ENCODE measurements at regions of chr20 and their contacts with region 1.

Region 1: GRCh38 chr20:44217342-44218092 is 6.9 kb upstream of the OSER1 start:
- DNase-seq: peak; percentile 41 to 80 (median 68)
- ATAC-seq: peak; percentile 68
- H3K4me3 ChIP-seq: peak overlapping the region; percentile 57
- H3K4me3 Mint-ChIP-seq: peak overlapping the region; percentile 76 to 90 (median 86)
- H3K27ac ChIP-seq: peak overlapping the region; percentile 75
- H3K27ac Mint-ChIP-seq: peak overlapping the region; percentile 81 to 99 (median 94)
- H3K4me1 ChIP-seq: peaks cover 29 to 33% of the 10 kb centered on the region in 2 donors
- H3K4me1 Mint-ChIP-seq: peaks cover 40 to 85% (median 72%) of the 10 kb centered on the region in 7 donors
- H3K27me3 ChIP-seq: no peaks in the 10 kb centered on the region
- H3K27me3 Mint-ChIP-seq: no peaks in the 10 kb centered on the region

Region 2: DNA sequence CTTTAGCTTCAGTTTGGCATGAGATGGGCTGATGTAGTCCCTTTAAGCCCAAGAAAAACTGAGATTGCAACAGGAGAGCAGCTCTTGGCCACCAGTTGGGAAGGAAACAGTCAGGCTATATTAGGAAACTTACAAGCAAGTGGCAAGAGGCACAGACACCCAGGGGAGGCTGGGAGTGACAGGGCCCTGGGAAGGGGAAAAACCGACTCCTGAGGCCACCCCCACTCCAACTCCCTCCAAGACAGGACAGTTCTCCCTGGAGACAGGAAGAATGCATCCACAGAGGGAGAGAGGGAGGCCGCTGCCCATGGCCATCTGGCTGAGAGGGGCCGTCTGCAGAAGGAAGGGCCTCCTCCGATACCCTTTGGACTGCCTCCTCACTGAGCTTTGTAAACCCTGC is 51.0 kb before region 1 on chr20:
- CTCF ChIA-PET with region 1: no interaction called
- POLR2A ChIA-PET with region 1: no interaction called
- intact Hi-C with region 1: no loop called
- DNase-seq: no peak
- ATAC-seq: no peak
- H3K4me3 ChIP-seq: no peak overlapping the region
- H3K4me3 Mint-ChIP-seq: no peak overlapping the region
- H3K27ac ChIP-seq: no peak overlapping the region
- H3K27ac Mint-ChIP-seq: no peak overlapping the region
- H3K4me1 ChIP-seq: no peaks in the 10 kb centered on the region
- H3K4me1 Mint-ChIP-seq: peaks cover 0 to 2% (median 0%) of the 10 kb centered on the region in 7 donors
- H3K27me3 ChIP-seq: no peaks in the 10 kb centered on the region
- H3K27me3 Mint-ChIP-seq: peaks cover 26 to 59% (median 48%) of the 10 kb centered on the region in 5 donors

Region 3: DNA sequence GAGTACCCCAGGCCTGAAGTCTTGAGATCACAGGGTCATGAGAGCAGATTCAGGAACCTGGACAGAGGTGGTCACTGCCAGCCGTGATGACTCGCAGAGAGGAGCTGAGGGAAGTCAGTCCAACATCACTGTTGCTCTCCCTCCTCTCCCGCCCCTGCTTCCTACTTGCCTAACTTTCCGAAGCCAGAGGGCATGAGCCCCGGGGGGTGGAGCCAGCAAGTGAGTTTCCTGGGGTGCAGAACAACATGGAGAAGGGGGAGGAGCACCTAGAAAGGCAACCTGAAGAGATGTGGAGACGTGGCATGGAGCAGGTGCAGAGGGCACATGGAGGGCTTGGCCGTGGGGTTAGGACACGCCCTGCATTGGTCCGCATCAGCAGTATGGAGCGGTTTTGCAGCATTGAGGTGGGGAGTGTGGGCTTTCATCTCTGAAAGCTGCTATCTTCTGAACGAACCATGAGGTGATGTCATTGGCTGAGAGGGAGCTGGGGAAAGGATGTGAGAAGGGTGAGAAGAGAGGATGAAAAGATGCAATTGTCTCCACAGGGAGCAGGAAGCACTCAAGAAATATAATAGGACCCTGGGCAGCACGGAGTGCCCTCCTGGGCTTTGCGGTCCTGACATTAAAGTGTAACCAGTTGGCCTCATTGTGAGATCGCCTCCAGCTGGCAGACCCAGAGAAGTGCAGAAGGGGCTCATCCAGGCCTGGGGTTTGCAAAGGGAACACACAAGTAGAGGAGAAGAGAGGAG is 54.6 kb after region 1 on chr20:
- CTCF ChIA-PET with region 1: interaction called, 27 read pairs
- POLR2A ChIA-PET with region 1: interaction called, 6 read pairs
- intact Hi-C with region 1: loop called (anchors 1 to 5 kb)
- DNase-seq: peak in 3 of 9 donors; percentile 7 to 41 (median 8)
- ATAC-seq: peak; percentile 48
- H3K4me3 ChIP-seq: no peak overlapping the region
- H3K4me3 Mint-ChIP-seq: no peak overlapping the region
- H3K27ac ChIP-seq: no peak overlapping the region
- H3K27ac Mint-ChIP-seq: no peak overlapping the region
- H3K4me1 ChIP-seq: no peaks in the 10 kb centered on the region
- H3K4me1 Mint-ChIP-seq: peaks cover 0 to 2% (median 0%) of the 10 kb centered on the region in 7 donors
- H3K27me3 ChIP-seq: no peaks in the 10 kb centered on the region
- H3K27me3 Mint-ChIP-seq: no peaks in the 10 kb centered on the region

Region 4: DNA sequence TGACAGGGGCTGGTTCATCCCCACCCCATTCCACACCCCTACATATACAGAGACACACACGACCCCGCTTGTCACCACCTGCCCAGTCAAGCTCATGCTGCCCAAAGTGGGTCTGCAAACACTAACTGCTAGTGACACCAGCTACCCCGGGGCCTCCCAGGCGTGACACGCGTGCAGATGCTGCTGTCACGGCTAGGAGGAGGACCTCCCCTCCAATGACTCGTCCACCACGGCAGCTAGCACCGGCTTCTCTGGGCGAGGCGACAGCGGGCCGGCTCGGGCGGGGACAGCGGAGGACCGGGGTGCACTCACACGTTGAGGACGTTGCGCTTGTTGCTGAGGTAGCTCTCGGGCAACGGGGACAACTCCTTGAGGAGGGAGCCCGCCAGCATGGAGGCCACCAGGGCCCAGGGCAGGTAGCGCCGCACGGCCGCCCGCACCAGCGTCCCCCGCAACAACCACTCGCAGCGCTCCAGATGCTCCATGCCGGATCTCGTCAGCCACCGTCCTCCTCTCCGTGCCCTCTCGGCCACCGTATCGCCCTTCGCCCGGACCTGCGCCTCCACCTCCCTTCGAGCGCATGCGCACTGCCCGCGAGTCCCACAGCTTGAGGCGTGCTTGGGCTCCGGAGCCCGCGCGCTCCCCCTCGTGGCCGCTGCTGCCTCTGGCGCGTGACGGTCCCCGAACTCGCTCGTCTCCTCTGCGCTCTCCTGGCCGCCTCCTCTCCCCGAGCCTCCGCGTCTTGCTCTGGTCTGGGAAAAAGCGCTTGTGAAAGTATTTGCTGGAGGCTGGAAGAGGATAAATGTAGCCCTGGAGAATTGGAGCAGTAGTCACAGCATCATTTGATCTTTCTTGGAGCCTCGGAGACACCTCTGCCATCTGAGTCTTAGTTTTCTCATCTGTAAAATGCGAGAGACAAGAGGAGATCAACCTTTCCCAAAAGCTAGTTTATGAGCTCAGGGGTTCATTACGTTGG is 93.4 kb after region 1 on chr20 and contains the start of gene FITM2:
- CTCF ChIA-PET with region 1: interaction called, 365 read pairs
- POLR2A ChIA-PET with region 1: interaction called, 165 read pairs
- intact Hi-C with region 1: loop called (anchors 1 kb)
- DNase-seq: peak; percentile 96 to 99 (median 98)
- ATAC-seq: peak; percentile 99
- H3K4me3 ChIP-seq: peak within 1 kb of the TSS; percentile 98
- H3K4me3 Mint-ChIP-seq: peak within 1 kb of the TSS; percentile 87 to 97 (median 95)
- H3K27ac ChIP-seq: peak within 1 kb of the TSS; percentile 82
- H3K27ac Mint-ChIP-seq: peak within 1 kb of the TSS; percentile 91 to 98 (median 93)
- H3K4me1 ChIP-seq: peaks cover 12 to 18% of the 10 kb centered on the region in 2 donors
- H3K4me1 Mint-ChIP-seq: peaks cover 15 to 35% (median 28%) of the 10 kb centered on the region in 7 donors
- H3K27me3 ChIP-seq: no peaks in the 10 kb centered on the region
- H3K27me3 Mint-ChIP-seq: peaks cover 0 to 8% (median 0%) of the 10 kb centered on the region in 5 donors
- total RNA-seq, gene FITM2: 3.1 to 7.9 (median 5.0) TPM

Region 5: GRCh38 chr20:44388466-44389023 is 171.0 kb after region 1 on chr20:
- CTCF ChIA-PET with region 1: interaction called, 64 read pairs
- POLR2A ChIA-PET with region 1: no interaction called
- intact Hi-C with region 1: loop called (anchors 1 kb)
- DNase-seq: peak; percentile 30 to 70 (median 50)
- ATAC-seq: peak; percentile 91
- H3K4me3 ChIP-seq: no peak overlapping the region
- H3K4me3 Mint-ChIP-seq: peak overlapping the region in 4 of 10 donors; percentile 14 to 69 (median 38)
- H3K27ac ChIP-seq: no peak overlapping the region
- H3K27ac Mint-ChIP-seq: peak overlapping the region in 1 of 9 donors; percentile 41
- H3K4me1 ChIP-seq: no peaks in the 10 kb centered on the region
- H3K4me1 Mint-ChIP-seq: peaks cover 4 to 16% (median 8%) of the 10 kb centered on the region in 7 donors
- H3K27me3 ChIP-seq: no peaks in the 10 kb centered on the region
- H3K27me3 Mint-ChIP-seq: peaks cover 9 to 20% (median 10%) of the 10 kb centered on the region in 5 donors

Region 6: GRCh38 chr20:44475694-44476560 is 258.4 kb after region 1 on chr20 and contains the start of gene TTPAL:
- CTCF ChIA-PET with region 1: interaction called, 5 read pairs
- POLR2A ChIA-PET with region 1: interaction called, 8 read pairs
- intact Hi-C with region 1: loop called in 1 of 2 experiments (anchors 5 kb)
- DNase-seq: peak; percentile 83 to 95 (median 89)
- ATAC-seq: peak; percentile 98
- H3K4me3 ChIP-seq: peak within 1 kb of the TSS; percentile 65
- H3K4me3 Mint-ChIP-seq: peak within 1 kb of the TSS; percentile 87 to 96 (median 91)
- H3K27ac ChIP-seq: peak within 1 kb of the TSS; percentile 97
- H3K27ac Mint-ChIP-seq: peak within 1 kb of the TSS; percentile 86 to 97 (median 94)
- H3K4me1 ChIP-seq: peaks cover 12 to 17% of the 10 kb centered on the region in 2 donors
- H3K4me1 Mint-ChIP-seq: peaks cover 14 to 43% (median 31%) of the 10 kb centered on the region in 7 donors
- H3K27me3 ChIP-seq: no peaks in the 10 kb centered on the region
- H3K27me3 Mint-ChIP-seq: no peaks in the 10 kb centered on the region
- total RNA-seq, gene TTPAL: 12.0 to 20.7 (median 17.0) TPM

Region 7: GRCh38 chr20:44683263-44684046 is 465.9 kb after region 1 on chr20:
- CTCF ChIA-PET with region 1: interaction called, 6 read pairs
- POLR2A ChIA-PET with region 1: no interaction called
- intact Hi-C with region 1: loop called in 1 of 2 experiments (anchors 2 kb)
- DNase-seq: peak in 6 of 9 donors; percentile 21 to 68 (median 44)
- ATAC-seq: peak; percentile 77
- H3K4me3 ChIP-seq: no peak overlapping the region
- H3K4me3 Mint-ChIP-seq: no peak overlapping the region
- H3K27ac ChIP-seq: no peak overlapping the region
- H3K27ac Mint-ChIP-seq: peak overlapping the region in 1 of 9 donors; percentile 61
- H3K4me1 ChIP-seq: no peaks in the 10 kb centered on the region
- H3K4me1 Mint-ChIP-seq: peaks cover 5 to 15% (median 9%) of the 10 kb centered on the region in 7 donors
- H3K27me3 ChIP-seq: no peaks in the 10 kb centered on the region
- H3K27me3 Mint-ChIP-seq: peaks cover 0 to 6% (median 0%) of the 10 kb centered on the region in 5 donors

Measured in naive thymus-derived CD4-positive, alpha-beta T cell (primary cell).